Endothelial cell of umbilical vein (primary cell): ENCODE measurements at regions of chr5 and their contacts with region 1.

Region 1: GRCh38 chr5:139690064-139690802 is 42.1 kb downstream of the CXXC5 start:
- DNase-seq: peak; percentile 53
- H3K4me3 ChIP-seq: no peak overlapping the region
- H3K27ac ChIP-seq: no peak overlapping the region
- H3K4me1 ChIP-seq: no peaks in the 10 kb centered on the region
- H3K27me3 ChIP-seq: no peaks in the 10 kb centered on the region
- CTCF ChIP-seq: peak; percentile 42 to 46
- POLR2A ChIP-seq: no peak

Region 2: DNA sequence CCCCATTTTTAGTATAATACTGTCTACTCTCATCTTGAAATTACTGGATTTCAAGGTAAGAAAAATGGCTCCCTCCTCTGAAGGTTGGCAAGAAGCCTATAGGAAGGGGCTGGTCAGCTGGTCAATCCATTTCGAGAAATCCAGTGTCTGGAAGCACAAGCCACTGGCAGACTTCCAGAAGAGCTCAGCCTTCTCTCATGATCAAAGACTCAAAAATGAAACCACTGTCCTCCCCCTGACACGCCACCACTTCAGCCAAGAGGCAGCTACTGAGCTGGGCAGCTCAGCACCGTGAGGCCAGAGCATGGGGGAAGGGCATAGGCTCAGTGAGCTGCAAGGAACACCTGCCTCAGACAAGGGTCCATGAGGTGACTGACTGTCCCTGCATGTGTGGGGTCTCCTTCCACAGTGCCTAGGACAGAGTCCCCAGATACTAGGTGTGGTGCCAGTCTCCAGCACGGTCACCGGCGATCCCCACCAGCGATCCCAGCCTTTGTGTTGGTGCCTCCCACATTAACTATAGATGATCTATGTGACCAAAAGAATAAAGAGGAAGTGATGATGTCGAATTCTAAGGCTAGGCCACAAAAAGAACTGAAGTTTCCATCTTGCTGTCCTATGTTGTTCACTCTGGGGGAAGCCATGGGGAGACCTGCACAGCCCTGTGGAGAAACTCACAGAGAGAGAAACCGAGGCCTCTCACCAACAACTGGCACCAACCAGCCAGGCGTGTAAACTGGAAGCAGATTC is 715.0 kb before region 1 on chr5:
- CTCF ChIA-PET with region 1: no interaction called
- POLR2A ChIA-PET with region 1: no interaction called
- dilution Hi-C with region 1: no loop called
- intact Hi-C with region 1: no loop called
- DNase-seq: peak; percentile 66
- H3K4me3 ChIP-seq: no peak overlapping the region
- H3K27ac ChIP-seq: peak overlapping the region; percentile 52
- H3K4me1 ChIP-seq: peaks cover 13% of the 10 kb centered on the region
- H3K27me3 ChIP-seq: no peaks in the 10 kb centered on the region
- CTCF ChIP-seq: no peak
- POLR2A ChIP-seq: no peak

Region 3: DNA sequence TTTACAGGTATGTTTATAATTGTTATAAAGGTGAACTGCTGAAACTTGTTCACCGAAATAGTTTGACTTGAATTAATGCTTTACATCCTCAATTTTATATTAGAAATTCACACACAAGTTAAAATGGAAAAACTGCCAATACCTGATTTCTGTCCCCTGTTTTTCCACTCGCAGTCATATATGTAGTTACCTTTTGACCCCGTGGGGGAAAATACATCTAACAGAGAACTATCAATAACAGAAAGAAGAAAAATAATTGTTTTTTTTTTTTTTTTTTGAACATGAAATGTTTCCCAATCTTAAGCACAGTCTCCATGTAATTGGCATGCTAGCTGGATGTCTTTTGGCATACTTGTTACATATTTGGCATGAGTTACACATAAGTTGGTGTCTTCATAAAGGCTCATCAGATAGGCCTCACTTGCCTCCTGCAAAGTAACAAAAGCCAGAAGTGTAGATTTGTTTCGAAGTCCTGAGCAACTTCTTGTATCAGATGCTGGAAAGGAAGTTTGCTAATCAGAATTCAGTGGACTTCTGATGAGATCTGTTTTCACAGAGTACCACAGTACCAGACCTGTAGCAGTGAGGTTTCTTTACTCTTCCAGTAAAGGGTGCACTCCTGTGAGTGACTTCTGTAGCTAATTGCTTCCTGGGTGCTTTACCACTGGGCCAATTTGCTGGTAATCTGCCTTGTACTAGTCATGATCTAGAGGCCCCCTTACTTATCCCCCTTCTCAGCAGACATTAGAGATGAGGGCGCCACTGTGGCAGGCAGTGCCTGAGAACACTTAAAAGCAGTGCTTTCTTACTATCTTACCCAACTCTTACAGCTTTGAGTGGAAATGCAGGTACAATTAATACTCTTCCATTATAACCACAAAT is 78.3 kb before region 1 on chr5:
- CTCF ChIA-PET with region 1: no interaction called
- POLR2A ChIA-PET with region 1: no interaction called
- dilution Hi-C with region 1: no loop called
- intact Hi-C with region 1: no loop called
- DNase-seq: no peak
- H3K4me3 ChIP-seq: no peak overlapping the region
- H3K27ac ChIP-seq: no peak overlapping the region
- H3K4me1 ChIP-seq: no peaks in the 10 kb centered on the region
- H3K27me3 ChIP-seq: no peaks in the 10 kb centered on the region
- CTCF ChIP-seq: no peak
- POLR2A ChIP-seq: no peak

Region 4: GRCh38 chr5:139642891-139643871 is 47.1 kb before region 1 on chr5:
- CTCF ChIA-PET with region 1: interaction called, 62 read pairs
- POLR2A ChIA-PET with region 1: no interaction called
- dilution Hi-C with region 1: no loop called
- intact Hi-C with region 1: no loop called
- DNase-seq: no peak
- H3K4me3 ChIP-seq: no peak overlapping the region
- H3K27ac ChIP-seq: no peak overlapping the region
- H3K4me1 ChIP-seq: peaks cover 3% of the 10 kb centered on the region
- H3K27me3 ChIP-seq: peaks cover 3 to 6% of the 10 kb centered on the region in 2 experiments
- CTCF ChIP-seq: no peak
- POLR2A ChIP-seq: no peak

Region 5: DNA sequence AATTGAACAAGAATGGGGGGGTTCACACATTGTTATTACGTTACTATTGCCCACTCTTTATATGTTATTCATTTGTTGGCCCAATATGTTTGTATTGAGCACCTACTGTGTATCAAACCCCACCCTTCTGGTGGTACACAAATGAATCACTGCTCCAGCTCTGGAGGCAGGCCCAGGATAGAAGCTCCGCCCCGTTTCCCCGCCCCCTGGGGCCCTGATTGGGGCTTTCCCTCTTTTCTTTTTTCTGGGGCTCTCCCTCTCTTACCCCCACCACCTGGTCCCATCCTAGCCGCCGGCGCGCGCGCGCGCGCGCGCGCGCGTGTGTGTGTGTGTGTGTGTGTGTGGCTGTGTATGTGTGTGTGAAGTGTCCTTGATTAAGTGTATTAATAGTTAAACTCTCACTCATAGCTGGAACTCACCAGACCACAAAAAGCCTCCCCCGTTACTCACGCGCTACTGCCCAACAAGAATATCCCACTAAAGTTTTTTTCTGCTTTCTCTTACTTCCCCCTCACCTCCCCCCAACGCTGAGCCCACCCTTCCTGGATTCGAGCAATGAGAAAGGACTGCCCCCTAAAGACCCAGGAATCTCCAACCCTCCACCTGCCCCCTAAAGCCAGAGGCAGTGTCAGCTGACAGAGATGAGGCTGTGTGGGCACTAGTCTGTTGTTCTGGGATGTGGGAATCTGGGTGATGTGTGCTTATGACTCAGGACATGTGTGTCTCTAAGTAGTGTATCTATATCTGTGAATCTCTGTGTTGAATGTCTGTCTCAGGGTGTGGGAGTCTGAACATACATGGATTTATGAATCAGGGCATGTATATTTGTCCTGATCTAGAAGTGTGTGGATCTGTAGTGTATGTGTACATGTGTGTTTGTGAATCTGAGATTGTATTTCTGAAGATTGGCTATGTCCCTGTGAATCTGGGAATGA is 38.1 kb before region 1 on chr5:
- CTCF ChIA-PET with region 1: interaction called, 62 read pairs
- POLR2A ChIA-PET with region 1: no interaction called
- dilution Hi-C with region 1: no loop called
- intact Hi-C with region 1: no loop called
- DNase-seq: peak; percentile 73
- H3K4me3 ChIP-seq: no peak overlapping the region
- H3K27ac ChIP-seq: no peak overlapping the region
- H3K4me1 ChIP-seq: peaks cover 29% of the 10 kb centered on the region
- H3K27me3 ChIP-seq: peaks cover 5 to 24% of the 10 kb centered on the region in 2 experiments
- CTCF ChIP-seq: no peak
- POLR2A ChIP-seq: no peak

Region 6: GRCh38 chr5:139660923-139661814 is 29.1 kb before region 1 on chr5:
- CTCF ChIA-PET with region 1: interaction called, 33 read pairs
- POLR2A ChIA-PET with region 1: interaction called, 3 read pairs
- dilution Hi-C with region 1: no loop called
- intact Hi-C with region 1: no loop called
- DNase-seq: peak; percentile 83
- H3K4me3 ChIP-seq: no peak overlapping the region
- H3K27ac ChIP-seq: no peak overlapping the region
- H3K4me1 ChIP-seq: peaks cover 33% of the 10 kb centered on the region
- H3K27me3 ChIP-seq: no peaks in the 10 kb centered on the region
- CTCF ChIP-seq: no peak
- POLR2A ChIP-seq: no peak

Region 7: GRCh38 chr5:139678751-139679750 is 11.2 kb before region 1 on chr5:
- CTCF ChIA-PET with region 1: interaction called, 11 read pairs
- POLR2A ChIA-PET with region 1: no interaction called
- dilution Hi-C with region 1: no loop called
- intact Hi-C with region 1: no loop called
- DNase-seq: no peak
- H3K4me3 ChIP-seq: no peak overlapping the region
- H3K27ac ChIP-seq: no peak overlapping the region
- H3K4me1 ChIP-seq: no peaks in the 10 kb centered on the region
- H3K27me3 ChIP-seq: no peaks in the 10 kb centered on the region
- CTCF ChIP-seq: no peak
- POLR2A ChIP-seq: no peak

Region 8: GRCh38 chr5:139711067-139711905 is 21.1 kb after region 1 on chr5:
- CTCF ChIA-PET with region 1: interaction called, 10 read pairs
- POLR2A ChIA-PET with region 1: interaction called, 5 read pairs
- dilution Hi-C with region 1: no loop called
- intact Hi-C with region 1: no loop called
- DNase-seq: no peak
- H3K4me3 ChIP-seq: peak overlapping the region in 1 of 3 experiments; percentile 20
- H3K27ac ChIP-seq: no peak overlapping the region
- H3K4me1 ChIP-seq: peaks cover 7% of the 10 kb centered on the region
- H3K27me3 ChIP-seq: peaks cover 11 to 13% of the 10 kb centered on the region in 2 experiments
- CTCF ChIP-seq: peak in 1 of 2 donors; percentile 12
- POLR2A ChIP-seq: no peak

Region 9: DNA sequence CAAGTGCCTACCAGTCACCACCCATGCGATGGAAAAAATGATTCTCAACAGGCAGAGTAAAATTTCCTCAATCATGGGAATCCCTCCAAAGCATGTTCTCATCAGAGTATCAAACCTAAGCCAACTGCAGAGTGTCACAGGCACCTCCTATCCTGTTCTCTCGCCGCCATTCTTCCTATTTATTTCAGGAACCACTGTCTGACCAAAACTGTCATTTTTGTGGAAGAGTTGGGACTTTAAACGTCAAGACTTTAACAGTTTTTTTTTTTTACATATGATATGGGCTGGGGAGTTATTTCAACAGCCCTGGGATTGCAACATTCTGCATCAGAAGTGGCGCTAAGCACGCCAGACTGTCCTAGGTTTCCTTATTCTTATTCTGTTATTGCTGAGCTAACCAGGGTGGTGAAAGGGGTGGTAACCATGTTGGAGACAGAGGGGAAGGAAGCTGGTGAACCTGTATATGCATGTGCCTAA is 583.2 kb after region 1 on chr5:
- CTCF ChIA-PET with region 1: no interaction called
- POLR2A ChIA-PET with region 1: no interaction called
- dilution Hi-C with region 1: no loop called
- intact Hi-C with region 1: no loop called
- DNase-seq: no peak
- H3K4me3 ChIP-seq: no peak overlapping the region
- H3K27ac ChIP-seq: no peak overlapping the region
- H3K4me1 ChIP-seq: peaks cover 7% of the 10 kb centered on the region
- H3K27me3 ChIP-seq: no peaks in the 10 kb centered on the region
- CTCF ChIP-seq: no peak
- POLR2A ChIP-seq: no peak